Tibial artery (tissue), 4 donors: ENCODE measurements at regions of chr5 and their contacts with region 1.

Region 1: DNA sequence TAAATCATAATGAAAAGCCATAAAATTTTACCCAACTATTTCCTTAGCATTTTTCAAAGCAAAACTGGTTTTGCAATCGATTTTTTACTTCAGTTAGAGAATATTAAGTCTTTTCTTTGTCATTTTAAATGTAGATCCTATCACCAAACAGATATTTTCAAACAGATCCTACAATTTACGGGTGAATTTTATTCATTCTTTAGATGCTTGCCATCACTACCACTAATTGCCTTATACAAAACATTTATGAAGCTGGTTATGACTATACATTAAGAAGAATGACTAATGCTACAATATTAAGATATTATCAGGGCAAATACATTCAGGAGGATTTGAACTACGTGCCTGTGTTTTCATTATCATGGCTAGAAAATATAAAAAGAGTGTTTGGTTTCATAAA is 196.9 kb downstream of the CWC27 start:
- DNase-seq: no peak
- H3K4me3 ChIP-seq: no peak overlapping the region
- H3K27ac ChIP-seq: no peak overlapping the region
- H3K4me1 ChIP-seq: no peaks in the 10 kb centered on the region
- H3K27me3 ChIP-seq: no peaks in the 10 kb centered on the region
- CTCF ChIP-seq: no peak

Region 2: DNA sequence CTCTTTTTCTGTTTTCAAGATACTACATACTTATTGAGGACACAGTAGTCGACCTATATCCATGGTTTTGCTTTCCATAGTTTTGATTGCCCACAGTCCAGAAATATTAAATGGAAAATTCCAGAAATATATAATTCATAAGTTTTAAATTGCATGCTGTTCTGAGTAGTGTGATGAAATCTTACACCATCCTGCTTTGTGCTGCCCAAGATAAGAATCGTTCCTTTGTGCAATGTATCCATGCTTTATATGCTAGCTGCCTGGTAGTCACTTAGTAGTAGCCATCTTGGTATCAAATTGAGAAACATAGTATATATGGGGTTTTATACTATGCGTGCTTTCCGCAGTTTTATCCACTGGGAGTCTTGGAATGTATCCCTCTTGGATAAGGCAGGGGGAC is 137.9 kb before region 1 on chr5:
- intact Hi-C with region 1: no loop called
- DNase-seq: no peak
- H3K4me3 ChIP-seq: no peak overlapping the region
- H3K27ac ChIP-seq: no peak overlapping the region
- H3K4me1 ChIP-seq: no peaks in the 10 kb centered on the region
- H3K27me3 ChIP-seq: no peaks in the 10 kb centered on the region
- CTCF ChIP-seq: no peak

Region 3: GRCh38 chr5:64887910-64888309 is 77.7 kb before region 1 on chr5:
- intact Hi-C with region 1: no loop called
- DNase-seq: no peak
- H3K4me3 ChIP-seq: no peak overlapping the region
- H3K27ac ChIP-seq: no peak overlapping the region
- H3K4me1 ChIP-seq: no peaks in the 10 kb centered on the region
- H3K27me3 ChIP-seq: no peaks in the 10 kb centered on the region
- CTCF ChIP-seq: no peak

Region 4: GRCh38 chr5:65102828-65103711 is 137.5 kb after region 1 on chr5:
- intact Hi-C with region 1: loop called (anchors 10 kb)
- DNase-seq: peak; percentile 54 to 78
- H3K4me3 ChIP-seq: peak overlapping the region; percentile 62 to 74
- H3K27ac ChIP-seq: peak overlapping the region; percentile 84 to 89
- H3K4me1 ChIP-seq: peaks cover 0 to 23% (median 7%) of the 10 kb centered on the region in 4 donors
- H3K27me3 ChIP-seq: no peaks in the 10 kb centered on the region
- CTCF ChIP-seq: peak; percentile 23 to 42

Region 5: DNA sequence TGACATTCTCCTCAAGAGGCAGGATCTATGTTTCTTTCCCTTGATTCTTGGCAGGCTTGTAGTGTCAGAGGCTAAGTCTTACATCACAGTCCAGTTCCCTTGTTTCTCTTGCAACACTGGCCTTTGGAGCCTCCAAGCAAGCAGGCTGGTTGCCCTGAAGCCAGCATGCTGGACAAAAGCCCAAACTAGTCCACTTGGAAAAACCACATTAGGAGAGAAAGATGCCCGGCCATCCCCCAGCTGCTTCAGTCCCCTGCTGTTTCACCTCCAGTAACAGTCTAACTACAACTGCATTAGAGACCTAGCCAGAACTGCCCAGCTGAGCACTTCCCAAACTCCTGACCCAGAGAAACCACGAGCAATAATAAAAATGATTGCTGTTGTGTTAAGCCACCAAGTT is 428.5 kb after region 1 on chr5:
- intact Hi-C with region 1: no loop called
- DNase-seq: peak; percentile 72 to 94
- H3K4me3 ChIP-seq: no peak overlapping the region
- H3K27ac ChIP-seq: peak overlapping the region; percentile 60 to 68
- H3K4me1 ChIP-seq: peaks cover 0 to 25% (median 13%) of the 10 kb centered on the region in 4 donors
- H3K27me3 ChIP-seq: no peaks in the 10 kb centered on the region
- CTCF ChIP-seq: no peak